CD8-positive, alpha-beta memory T cell (primary cell): ENCODE measurements at regions of chrX and their contacts with region 1.

Region 1: GRCh38 chrX:69222103-69223090 is 57.1 kb upstream of the PJA1 start:
- DNase-seq: peak; percentile 50 to 77 (median 59)
- H3K4me3 ChIP-seq: no peak overlapping the region
- H3K4me3 Mint-ChIP-seq: no peak overlapping the region
- H3K27ac ChIP-seq: no peak overlapping the region
- H3K27ac Mint-ChIP-seq: no peak overlapping the region
- H3K4me1 ChIP-seq: no peaks in the 10 kb centered on the region
- H3K4me1 Mint-ChIP-seq: peaks cover 0 to 6% (median 0%) of the 10 kb centered on the region in 3 donors
- H3K27me3 ChIP-seq: no peaks in the 10 kb centered on the region
- H3K27me3 Mint-ChIP-seq: peaks cover 0 to 5% of the 10 kb centered on the region in 2 donors

Region 2: GRCh38 chrX:68828740-68829552 is 393.5 kb before region 1 on chrX and contains the start of gene EFNB1:
- CTCF ChIA-PET with region 1: interaction called, 73 read pairs
- POLR2A ChIA-PET with region 1: interaction called, 4 read pairs
- DNase-seq: peak; percentile 71 to 91 (median 85)
- H3K4me3 ChIP-seq: peak within 1 kb of the TSS; percentile 76
- H3K4me3 Mint-ChIP-seq: peak within 1 kb of the TSS; percentile 87 to 95 (median 93)
- H3K27ac ChIP-seq: no peak within 1 kb of the TSS
- H3K27ac Mint-ChIP-seq: peak within 1 kb of the TSS; percentile 65 to 99 (median 86)
- H3K4me1 ChIP-seq: peaks cover 6% of the 10 kb centered on the region
- H3K4me1 Mint-ChIP-seq: peaks cover 17 to 33% (median 17%) of the 10 kb centered on the region in 3 donors
- H3K27me3 ChIP-seq: no peaks in the 10 kb centered on the region
- H3K27me3 Mint-ChIP-seq: peaks cover 0 to 4% of the 10 kb centered on the region in 2 donors
- total RNA-seq, gene EFNB1: 7.2 to 7.7 TPM

Region 3: DNA sequence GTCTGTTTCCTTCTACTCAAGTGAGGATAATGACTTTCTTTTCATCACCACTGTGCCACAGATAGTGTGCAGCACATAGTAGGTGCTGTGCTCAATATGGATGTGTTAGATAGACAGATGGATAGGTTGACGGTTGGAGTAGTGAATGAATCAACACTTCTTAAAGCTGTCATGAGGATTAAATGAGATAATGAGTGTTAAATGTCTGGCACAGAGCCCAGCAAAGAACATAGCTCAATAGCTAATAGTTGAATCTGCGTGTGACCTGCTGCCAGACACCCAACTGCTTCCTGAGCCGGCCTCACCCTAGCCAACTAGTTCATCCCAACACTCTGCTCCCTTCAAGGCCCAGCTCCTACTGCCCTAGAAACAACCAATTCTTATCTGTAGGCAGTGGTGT is 10.5 kb after region 1 on chrX:
- CTCF ChIA-PET with region 1: interaction called, 12 read pairs
- POLR2A ChIA-PET with region 1: no interaction called
- DNase-seq: no peak
- H3K4me3 ChIP-seq: no peak overlapping the region
- H3K4me3 Mint-ChIP-seq: no peak overlapping the region
- H3K27ac ChIP-seq: no peak overlapping the region
- H3K27ac Mint-ChIP-seq: no peak overlapping the region
- H3K4me1 ChIP-seq: no peaks in the 10 kb centered on the region
- H3K4me1 Mint-ChIP-seq: no peaks in the 10 kb centered on the region
- H3K27me3 ChIP-seq: no peaks in the 10 kb centered on the region
- H3K27me3 Mint-ChIP-seq: peaks cover 0 to 3% of the 10 kb centered on the region in 2 donors